Heart left ventricle (tissue), 16 donors: ENCODE measurements at regions of chr10 and their contacts with region 1.

Region 1: GRCh38 chr10:98467506-98468346 is 21.0 kb upstream of the HPS1 start:
- DNase-seq: peak; percentile 70 to 80 (median 74)
- ATAC-seq: peak; percentile 86 to 98 (median 94)
- H3K4me3 ChIP-seq: peak overlapping the region; percentile 35 to 67 (median 60)
- H3K27ac ChIP-seq: peak overlapping the region in 1 of 12 donors; percentile 7
- H3K4me1 ChIP-seq: peaks cover 0 to 30% (median 5%) of the 10 kb centered on the region in 12 donors
- H3K27me3 ChIP-seq: peaks cover 0 to 8% (median 0%) of the 10 kb centered on the region in 9 donors
- CTCF ChIP-seq: peak; percentile 71 to 92 (median 82)
- POLR2A ChIP-seq: no peak

Region 2: GRCh38 chr10:98664331-98665042 is 196.8 kb after region 1 on chr10:
- intact Hi-C with region 1: loop called in 6 of 10 experiments (anchors 1 to 10 kb)
- DNase-seq: peak in 1 of 5 donors; percentile 37
- ATAC-seq: no peak
- H3K4me3 ChIP-seq: no peak overlapping the region
- H3K27ac ChIP-seq: no peak overlapping the region
- H3K4me1 ChIP-seq: no peaks in the 10 kb centered on the region
- H3K27me3 ChIP-seq: no peaks in the 10 kb centered on the region
- CTCF ChIP-seq: peak in 11 of 12 donors; percentile 25 to 57 (median 44)
- POLR2A ChIP-seq: no peak

Region 3: DNA sequence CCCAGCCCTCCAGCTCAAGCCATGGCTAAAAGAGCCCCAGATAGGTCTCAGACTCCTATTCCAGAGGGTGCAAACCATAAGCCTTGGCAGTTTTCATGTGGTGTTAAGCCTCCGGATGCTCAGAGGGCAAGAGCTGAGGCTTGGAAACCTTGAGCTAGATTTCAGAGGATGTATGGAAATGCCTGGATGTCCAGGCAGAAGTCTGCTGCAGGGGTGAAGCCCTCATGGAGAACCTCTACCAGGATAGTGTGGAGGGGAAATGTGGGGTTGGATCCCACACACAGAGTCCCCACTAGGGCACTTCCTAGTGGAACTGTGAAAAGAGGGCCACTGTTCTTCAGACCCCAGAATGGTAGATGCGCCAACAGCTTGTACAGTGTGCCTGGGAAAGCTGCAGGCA is 781.1 kb after region 1 on chr10:
- intact Hi-C with region 1: loop called (anchors 1 to 5 kb)
- DNase-seq: no peak
- ATAC-seq: no peak
- H3K4me3 ChIP-seq: no peak overlapping the region
- H3K27ac ChIP-seq: no peak overlapping the region
- H3K4me1 ChIP-seq: no peaks in the 10 kb centered on the region
- H3K27me3 ChIP-seq: peaks cover 0 to 7% (median 0%) of the 10 kb centered on the region in 9 donors
- CTCF ChIP-seq: no peak
- POLR2A ChIP-seq: no peak

Region 4: DNA sequence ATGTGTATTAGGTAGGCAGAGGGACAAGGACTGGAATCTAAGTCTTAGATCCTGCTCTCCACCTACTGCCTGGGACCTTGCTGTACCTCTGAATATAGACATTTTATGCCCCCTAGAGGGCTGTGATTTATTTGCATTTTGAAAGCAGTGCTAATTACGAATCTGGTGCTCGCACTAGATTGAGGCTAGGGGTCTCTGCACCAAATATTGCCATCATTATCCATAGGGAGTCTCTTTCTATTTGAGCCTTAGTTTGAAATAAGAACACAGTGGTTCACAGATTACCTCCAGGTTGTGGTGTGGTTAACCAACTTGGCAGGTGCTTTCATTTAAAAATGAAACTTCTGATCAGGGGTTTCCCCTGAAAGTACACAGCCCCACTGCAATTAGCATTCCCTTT is 903.3 kb after region 1 on chr10:
- intact Hi-C with region 1: loop called in 3 of 10 experiments (anchors 10 kb)
- DNase-seq: no peak
- ATAC-seq: peak in 1 of 4 donors; percentile 47
- H3K4me3 ChIP-seq: no peak overlapping the region
- H3K27ac ChIP-seq: no peak overlapping the region
- H3K4me1 ChIP-seq: no peaks in the 10 kb centered on the region
- H3K27me3 ChIP-seq: peaks cover 0 to 19% (median 0%) of the 10 kb centered on the region in 9 donors
- CTCF ChIP-seq: peak in 8 of 12 donors; percentile 19 to 53 (median 39)
- POLR2A ChIP-seq: no peak

Region 5: DNA sequence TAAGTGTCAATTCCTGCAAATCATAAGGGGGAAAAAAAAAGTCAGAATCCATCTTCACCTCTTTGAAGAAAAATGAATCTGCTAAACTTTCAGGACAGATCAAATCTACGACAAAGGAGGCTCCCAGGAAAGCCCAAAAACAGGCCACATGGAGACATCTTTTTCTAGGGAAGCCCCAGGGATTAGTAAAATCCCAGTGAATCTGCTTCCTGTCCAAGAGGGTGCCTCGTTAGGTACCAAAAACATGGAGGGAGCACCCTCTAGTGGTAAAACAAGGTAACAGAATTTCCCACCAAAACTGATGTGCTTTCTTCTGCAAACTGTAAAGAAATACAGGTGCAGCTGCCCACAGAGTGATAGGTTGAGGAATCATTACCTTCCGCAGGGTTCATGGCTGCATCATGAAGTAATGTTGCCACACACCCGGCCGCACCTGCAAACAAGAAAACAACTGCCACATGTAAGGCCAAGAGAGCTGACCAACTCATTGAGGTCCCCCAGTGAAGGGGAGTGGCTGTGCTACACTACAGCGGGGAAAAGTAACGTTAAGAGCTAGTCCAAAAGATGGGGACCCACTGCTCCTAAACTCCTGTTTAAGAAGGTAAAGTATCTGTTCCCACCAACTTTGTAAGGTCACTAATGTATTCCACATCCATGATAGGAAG is 1144.6 kb after region 1 on chr10:
- intact Hi-C with region 1: loop called in 2 of 10 experiments (anchors 5 to 10 kb)
- DNase-seq: peak in 1 of 5 donors; percentile 31
- ATAC-seq: peak; percentile 40 to 77 (median 60)
- H3K4me3 ChIP-seq: no peak overlapping the region
- H3K27ac ChIP-seq: no peak overlapping the region
- H3K4me1 ChIP-seq: peaks cover 4 to 23% (median 11%) of the 10 kb centered on the region in 12 donors
- H3K27me3 ChIP-seq: no peaks in the 10 kb centered on the region
- CTCF ChIP-seq: peak; percentile 71 to 90 (median 81)
- POLR2A ChIP-seq: no peak